Activated B cell treated with CpG ODN at 0.5 μM for 24 hours (primary cell): ENCODE measurements at regions of chr1 and their contacts with region 1.

Region 1: DNA sequence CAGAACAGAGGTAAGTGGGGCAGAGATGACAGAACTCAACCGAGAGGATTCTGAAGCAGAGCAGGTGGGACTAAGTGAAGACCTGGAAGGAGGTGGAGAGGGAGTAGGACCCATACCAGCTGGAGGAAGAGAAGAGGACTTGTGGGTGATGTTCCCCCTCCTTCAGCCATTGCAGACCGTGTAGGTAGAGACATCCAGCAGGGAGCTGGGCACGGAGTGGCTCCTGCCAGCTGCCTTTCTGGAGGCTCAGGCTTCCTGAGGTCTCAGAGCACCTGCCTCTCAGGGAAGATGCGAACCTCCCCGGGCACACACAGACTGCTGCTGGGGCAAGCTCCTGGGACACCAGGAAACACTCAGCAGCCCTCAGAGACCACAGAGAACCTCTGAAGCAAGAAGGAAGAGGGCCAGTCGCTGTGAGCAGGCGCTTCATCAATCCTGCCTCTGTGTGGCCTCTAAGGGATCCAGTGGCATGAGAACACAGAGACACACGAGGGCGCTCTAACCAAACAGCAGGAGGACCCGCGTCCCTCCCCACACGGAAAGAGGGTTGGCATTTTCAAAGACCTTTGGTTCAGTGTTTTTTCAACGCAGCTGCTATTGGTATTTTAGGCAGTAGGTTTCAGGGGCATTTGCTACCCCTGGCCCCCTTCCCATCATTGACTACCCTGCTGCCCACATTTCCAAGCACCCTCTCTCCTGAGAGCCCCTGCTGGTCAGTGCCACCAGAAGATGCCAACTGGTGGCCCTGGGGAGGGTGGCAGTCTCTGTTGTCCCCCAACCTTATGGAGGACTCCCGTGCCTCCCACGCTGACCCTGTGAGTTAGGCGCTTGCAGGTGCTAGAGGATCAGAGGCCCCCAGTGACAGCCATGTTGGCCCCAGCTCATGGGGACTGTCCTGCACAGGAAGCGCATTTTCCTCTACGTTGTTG is 89.6 kb upstream of the EDN2 start:
- DNase-seq: peak; percentile 63
- ATAC-seq: peak; percentile 96
- H3K4me3 Mint-ChIP-seq: no peak overlapping the region
- H3K27ac Mint-ChIP-seq: no peak overlapping the region
- H3K4me1 Mint-ChIP-seq: peaks cover 23% of the 10 kb centered on the region
- H3K27me3 Mint-ChIP-seq: no peaks in the 10 kb centered on the region
- CTCF ChIP-seq: peak; percentile 70

Region 2: GRCh38 chr1:41222496-41222895 is 351.6 kb before region 1 on chr1:
- CTCF ChIA-PET with region 1: no interaction called
- POLR2A ChIA-PET with region 1: no interaction called
- intact Hi-C with region 1: no loop called
- DNase-seq: no peak
- ATAC-seq: no peak
- H3K4me3 Mint-ChIP-seq: no peak overlapping the region
- H3K27ac Mint-ChIP-seq: no peak overlapping the region
- H3K4me1 Mint-ChIP-seq: peaks cover 15% of the 10 kb centered on the region
- H3K27me3 Mint-ChIP-seq: no peaks in the 10 kb centered on the region
- CTCF ChIP-seq: no peak

Region 3: DNA sequence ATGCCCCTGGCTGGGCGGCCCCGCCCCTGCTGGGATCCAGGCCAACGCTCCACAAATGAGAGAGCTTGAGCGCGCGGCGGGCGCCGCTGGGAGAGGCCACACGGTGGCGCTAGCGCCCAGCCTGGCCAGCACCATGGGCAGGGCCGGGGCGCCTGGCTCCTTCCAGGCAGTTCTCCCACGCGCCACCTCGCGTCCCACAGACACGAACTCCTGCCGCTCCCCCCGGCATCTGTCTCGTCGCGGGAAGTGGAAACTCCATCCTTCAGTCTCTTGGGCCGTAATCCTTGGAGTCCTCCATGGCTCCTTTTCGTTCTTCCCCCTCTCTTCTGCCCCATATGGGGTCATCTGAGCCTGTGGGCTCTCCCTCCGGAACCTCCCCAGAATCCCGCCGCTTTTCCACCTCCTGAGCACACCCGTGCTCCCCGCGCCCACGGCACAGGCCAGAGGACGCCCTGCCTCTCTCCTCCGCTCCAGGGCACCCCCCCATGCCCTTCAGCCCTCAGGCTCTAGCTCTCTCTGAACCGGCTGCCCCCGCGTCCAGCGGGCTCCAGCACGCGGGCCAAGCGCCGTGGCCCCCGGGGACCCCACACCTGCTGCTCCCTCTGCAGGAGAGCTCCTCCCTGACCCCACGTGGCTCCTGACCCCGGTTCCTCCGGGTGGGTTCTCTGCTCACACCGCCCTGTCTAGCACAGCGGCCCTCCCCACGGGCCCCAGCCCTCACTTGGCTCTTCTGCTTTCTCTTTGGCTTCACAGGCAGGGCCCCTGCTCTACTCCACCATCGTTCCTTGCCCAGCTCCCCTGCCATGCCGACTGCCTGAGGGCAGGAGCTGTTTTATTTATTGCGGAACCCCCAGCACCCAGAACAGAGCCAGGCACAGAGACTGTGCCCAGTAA is 57.6 kb before region 1 on chr1:
- CTCF ChIA-PET with region 1: interaction called, 9 read pairs
- POLR2A ChIA-PET with region 1: no interaction called
- intact Hi-C with region 1: loop called (anchors 1 kb)
- DNase-seq: peak; percentile 74
- ATAC-seq: peak; percentile 91
- H3K4me3 Mint-ChIP-seq: peak overlapping the region; percentile 82
- H3K27ac Mint-ChIP-seq: peak overlapping the region; percentile 4
- H3K4me1 Mint-ChIP-seq: peaks cover 38% of the 10 kb centered on the region
- H3K27me3 Mint-ChIP-seq: no peaks in the 10 kb centered on the region
- CTCF ChIP-seq: peak; percentile 87

Region 4: GRCh38 chr1:41662061-41662764 is 88.2 kb after region 1 on chr1:
- CTCF ChIA-PET with region 1: interaction called, 9 read pairs
- POLR2A ChIA-PET with region 1: no interaction called
- intact Hi-C with region 1: loop called (anchors 2 kb)
- DNase-seq: peak; percentile 73
- ATAC-seq: peak; percentile 78
- H3K4me3 Mint-ChIP-seq: peak overlapping the region; percentile 74
- H3K27ac Mint-ChIP-seq: no peak overlapping the region
- H3K4me1 Mint-ChIP-seq: peaks cover 78% of the 10 kb centered on the region
- H3K27me3 Mint-ChIP-seq: no peaks in the 10 kb centered on the region
- CTCF ChIP-seq: no peak

Region 5: GRCh38 chr1:41868599-41868998 is 294.6 kb after region 1 on chr1:
- CTCF ChIA-PET with region 1: interaction called, 30 read pairs
- POLR2A ChIA-PET with region 1: interaction called, 4 read pairs
- intact Hi-C with region 1: loop called (anchors 1 kb)
- DNase-seq: no peak
- ATAC-seq: peak; percentile 74
- H3K4me3 Mint-ChIP-seq: no peak overlapping the region
- H3K27ac Mint-ChIP-seq: peak overlapping the region; percentile 4
- H3K4me1 Mint-ChIP-seq: peaks cover 23% of the 10 kb centered on the region
- H3K27me3 Mint-ChIP-seq: no peaks in the 10 kb centered on the region
- CTCF ChIP-seq: no peak

Region 6: GRCh38 chr1:42035830-42036604 is 462.0 kb after region 1 on chr1:
- CTCF ChIA-PET with region 1: no interaction called
- POLR2A ChIA-PET with region 1: no interaction called
- intact Hi-C with region 1: loop called (anchors 1 kb)
- DNase-seq: peak; percentile 99
- ATAC-seq: peak; percentile 95
- H3K4me3 Mint-ChIP-seq: peak overlapping the region; percentile 88
- H3K27ac Mint-ChIP-seq: no peak overlapping the region
- H3K4me1 Mint-ChIP-seq: peaks cover 11% of the 10 kb centered on the region
- H3K27me3 Mint-ChIP-seq: peaks cover 14% of the 10 kb centered on the region
- CTCF ChIP-seq: no peak

Region 7: GRCh38 chr1:42173155-42173933 is 599.3 kb after region 1 on chr1:
- CTCF ChIA-PET with region 1: interaction called, 71 read pairs
- POLR2A ChIA-PET with region 1: no interaction called
- intact Hi-C with region 1: loop called (anchors 1 kb)
- DNase-seq: peak; percentile 62
- ATAC-seq: peak; percentile 77
- H3K4me3 Mint-ChIP-seq: no peak overlapping the region
- H3K27ac Mint-ChIP-seq: no peak overlapping the region
- H3K4me1 Mint-ChIP-seq: no peaks in the 10 kb centered on the region
- H3K27me3 Mint-ChIP-seq: no peaks in the 10 kb centered on the region
- CTCF ChIP-seq: peak; percentile 47